ENCODE measurements at regions of chr13 and their contacts with region 1.

Region 1: DNA sequence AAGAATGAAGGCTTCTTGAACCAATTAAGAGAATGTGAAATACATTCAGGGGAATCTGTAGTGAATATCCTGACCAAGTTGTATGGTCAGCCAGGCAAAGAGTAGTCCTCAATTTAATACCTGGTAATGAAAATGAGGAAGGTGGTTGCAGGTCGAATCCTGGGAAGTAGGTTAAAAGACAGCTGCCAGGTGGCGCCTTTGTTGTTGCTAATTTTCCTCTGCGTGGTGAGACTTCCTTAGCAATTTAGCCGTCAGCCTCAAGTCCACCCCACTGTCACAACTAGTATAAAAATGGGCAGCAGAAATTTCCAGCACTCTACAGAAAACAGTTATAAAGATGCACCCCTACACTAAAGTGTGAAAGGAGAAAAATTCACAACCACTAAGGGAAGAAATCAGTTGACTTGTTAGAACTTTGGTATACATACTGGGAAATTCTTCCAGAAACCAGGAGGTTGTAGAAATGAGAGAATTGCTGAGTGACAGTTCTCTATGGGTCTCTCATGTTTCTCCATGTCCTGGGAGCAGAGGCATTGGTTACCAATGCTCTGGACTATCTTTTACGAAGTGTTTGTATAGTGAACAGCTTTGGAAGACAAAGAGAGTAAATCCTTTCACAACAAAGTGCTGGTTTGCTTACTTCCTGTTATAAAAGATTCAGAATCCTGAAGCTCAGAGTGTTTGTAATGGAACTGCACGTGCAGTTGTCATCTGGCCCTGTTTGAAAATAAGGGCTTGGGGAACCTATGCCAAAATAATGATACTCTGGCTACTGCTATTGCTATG is 235.9 kb downstream of the NHLRC3 start:
- DNase-seq: peak; percentile 41
- ATAC-seq: peak; percentile 34

Region 2: GRCh38 chr13:39391761-39392160 is 117.6 kb after region 1 on chr13:
- intact Hi-C with region 1: no loop called
- DNase-seq: no peak
- ATAC-seq: no peak

Region 3: GRCh38 chr13:39406688-39407087 is 132.5 kb after region 1 on chr13:
- intact Hi-C with region 1: loop called (anchors 10 kb)
- DNase-seq: no peak
- ATAC-seq: no peak

Region 4: GRCh38 chr13:39557285-39557955 is 283.3 kb after region 1 on chr13:
- intact Hi-C with region 1: no loop called
- DNase-seq: no peak
- ATAC-seq: no peak

Region 5: DNA sequence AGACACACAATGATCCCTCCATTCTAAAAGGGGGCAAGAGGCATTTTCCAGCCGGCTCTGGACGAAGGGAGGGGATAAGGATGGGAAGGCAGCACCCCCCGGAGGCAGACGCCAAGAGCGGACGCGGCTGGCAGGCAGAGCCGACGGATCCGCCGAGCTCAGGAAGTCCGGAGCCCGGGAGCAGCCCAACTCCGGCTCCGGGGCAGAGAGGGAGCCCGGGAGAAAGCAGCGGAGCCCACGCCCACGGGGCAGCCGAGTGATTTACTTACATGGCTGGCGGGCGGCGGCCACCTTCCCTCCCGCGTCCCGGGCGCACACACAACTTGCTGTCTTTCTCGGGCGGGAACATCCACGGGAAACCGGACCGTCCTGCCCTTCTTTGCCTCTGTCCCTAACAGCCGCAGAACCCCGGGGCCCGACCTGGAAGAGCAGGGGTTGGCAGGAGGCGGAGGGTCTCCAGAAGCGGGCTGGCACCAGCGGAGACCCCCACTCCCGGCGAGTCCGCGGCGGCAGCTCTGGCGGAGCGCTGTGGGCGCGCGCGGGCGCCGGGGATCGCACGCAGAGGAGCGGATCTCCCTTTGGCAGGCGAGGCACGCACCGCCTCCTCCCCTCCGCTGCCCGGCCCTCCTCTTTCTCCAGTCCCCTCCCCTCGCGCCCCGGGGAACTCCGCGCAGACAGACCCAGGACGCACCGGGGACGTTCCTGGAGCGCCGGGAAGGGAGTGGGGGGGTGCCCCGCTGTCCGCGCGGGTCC is 328.6 kb after region 1 on chr13 and contains the start of gene LHFPL6:
- intact Hi-C with region 1: loop called (anchors 5 kb)
- DNase-seq: peak; percentile 93
- ATAC-seq: peak; percentile 96
- total RNA-seq, gene LHFPL6: 54.3 TPM

Measured in left ventricle myocardium superior (tissue), 1 donor.